Adrenal gland (tissue), 19 donors: ENCODE measurements at regions of chr9 and their contacts with region 1.

Region 1: GRCh38 chr9:119968836-119969707 is 599.8 kb upstream of the BRINP1 start:
- DNase-seq: peak; percentile 64 to 90 (median 81)
- H3K4me3 ChIP-seq: no peak overlapping the region
- H3K27ac ChIP-seq: no peak overlapping the region
- H3K4me1 ChIP-seq: no peaks in the 10 kb centered on the region
- H3K27me3 ChIP-seq: no peaks in the 10 kb centered on the region
- CTCF ChIP-seq: peak; percentile 74 to 94 (median 79)
- POLR2A ChIP-seq: no peak

Region 2: GRCh38 chr9:119556129-119556875 is 412.8 kb before region 1 on chr9:
- intact Hi-C with region 1: loop called in 1 of 2 experiments (anchors 10 kb)
- DNase-seq: peak; percentile 57 to 89 (median 77)
- H3K4me3 ChIP-seq: peak overlapping the region in 1 of 4 donors; percentile 25
- H3K27ac ChIP-seq: no peak overlapping the region
- H3K4me1 ChIP-seq: peaks cover 0 to 5% of the 10 kb centered on the region in 2 donors
- H3K27me3 ChIP-seq: no peaks in the 10 kb centered on the region
- CTCF ChIP-seq: peak; percentile 76 to 93 (median 85)
- POLR2A ChIP-seq: no peak

Region 3: DNA sequence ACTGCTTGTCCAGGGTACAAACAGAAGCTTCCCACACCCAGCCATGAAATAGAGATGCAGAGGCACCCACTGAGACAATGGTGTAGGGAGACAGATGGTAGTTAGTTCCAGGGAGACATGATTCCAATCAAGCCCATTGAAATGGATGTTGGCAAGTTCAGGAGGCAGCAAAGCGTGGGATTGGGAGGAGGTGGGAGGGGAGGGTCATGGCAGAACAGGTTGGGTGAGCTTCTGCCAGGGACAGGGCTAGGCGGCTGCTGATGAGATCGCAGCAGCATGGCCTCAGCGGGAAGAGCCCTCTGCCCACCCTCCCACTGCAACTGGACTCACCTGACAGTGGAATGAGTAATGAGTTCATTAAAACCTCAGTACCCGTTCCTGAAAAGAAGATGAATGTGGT is 192.7 kb after region 1 on chr9:
- intact Hi-C with region 1: no loop called
- DNase-seq: no peak
- H3K4me3 ChIP-seq: no peak overlapping the region
- H3K27ac ChIP-seq: no peak overlapping the region
- H3K4me1 ChIP-seq: no peaks in the 10 kb centered on the region
- H3K27me3 ChIP-seq: no peaks in the 10 kb centered on the region
- CTCF ChIP-seq: no peak
- POLR2A ChIP-seq: no peak

Region 4: GRCh38 chr9:120477521-120478001 is 508.5 kb after region 1 on chr9:
- intact Hi-C with region 1: loop called in 1 of 2 experiments (anchors 10 kb)
- DNase-seq: peak; percentile 64 to 92 (median 74)
- H3K4me3 ChIP-seq: no peak overlapping the region
- H3K27ac ChIP-seq: no peak overlapping the region
- H3K4me1 ChIP-seq: peaks cover 4 to 18% of the 10 kb centered on the region in 2 donors
- H3K27me3 ChIP-seq: no peaks in the 10 kb centered on the region
- CTCF ChIP-seq: peak; percentile 89 to 96 (median 93)
- POLR2A ChIP-seq: no peak

Region 5: DNA sequence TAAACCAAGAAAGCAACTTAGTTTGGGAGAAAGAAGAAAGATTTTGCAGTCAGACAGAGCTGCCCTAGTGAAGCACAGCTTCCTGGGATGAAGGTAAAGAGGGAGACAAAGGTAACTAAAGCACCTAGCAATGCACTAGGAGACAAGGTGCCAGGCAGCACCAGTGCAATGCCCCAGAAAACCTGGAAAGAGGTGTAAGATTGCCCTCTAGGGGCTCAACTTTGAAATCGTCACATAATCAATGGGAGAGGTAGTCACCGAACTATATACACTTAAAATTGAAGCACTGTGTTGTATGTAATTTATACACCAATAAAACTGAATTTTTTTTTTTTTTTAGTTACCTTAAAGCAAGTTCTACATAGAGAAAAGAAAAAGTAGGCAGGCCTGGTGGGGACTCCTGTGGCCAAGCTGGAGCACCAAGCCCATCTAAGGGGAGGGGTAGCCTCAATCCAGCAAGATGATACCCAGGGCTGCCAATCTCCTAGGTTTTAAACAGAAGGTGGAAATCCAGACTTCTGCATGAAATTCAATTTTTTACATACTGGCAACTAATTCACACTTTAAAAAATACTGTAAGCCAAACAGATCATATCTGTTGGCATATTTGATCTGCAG is 562.7 kb after region 1 on chr9:
- intact Hi-C with region 1: loop called in 1 of 2 experiments (anchors 10 kb)
- DNase-seq: peak in 5 of 7 donors; percentile 20 to 62 (median 27)
- H3K4me3 ChIP-seq: no peak overlapping the region
- H3K27ac ChIP-seq: peak overlapping the region in 3 of 5 donors; percentile 4 to 55 (median 4)
- H3K4me1 ChIP-seq: peaks cover 0 to 4% of the 10 kb centered on the region in 2 donors
- H3K27me3 ChIP-seq: no peaks in the 10 kb centered on the region
- CTCF ChIP-seq: peak in 5 of 6 experiments; percentile 33 to 55 (median 46)
- POLR2A ChIP-seq: no peak